ENCODE measurements at regions of chr4 and their contacts with region 1.

Region 1: DNA sequence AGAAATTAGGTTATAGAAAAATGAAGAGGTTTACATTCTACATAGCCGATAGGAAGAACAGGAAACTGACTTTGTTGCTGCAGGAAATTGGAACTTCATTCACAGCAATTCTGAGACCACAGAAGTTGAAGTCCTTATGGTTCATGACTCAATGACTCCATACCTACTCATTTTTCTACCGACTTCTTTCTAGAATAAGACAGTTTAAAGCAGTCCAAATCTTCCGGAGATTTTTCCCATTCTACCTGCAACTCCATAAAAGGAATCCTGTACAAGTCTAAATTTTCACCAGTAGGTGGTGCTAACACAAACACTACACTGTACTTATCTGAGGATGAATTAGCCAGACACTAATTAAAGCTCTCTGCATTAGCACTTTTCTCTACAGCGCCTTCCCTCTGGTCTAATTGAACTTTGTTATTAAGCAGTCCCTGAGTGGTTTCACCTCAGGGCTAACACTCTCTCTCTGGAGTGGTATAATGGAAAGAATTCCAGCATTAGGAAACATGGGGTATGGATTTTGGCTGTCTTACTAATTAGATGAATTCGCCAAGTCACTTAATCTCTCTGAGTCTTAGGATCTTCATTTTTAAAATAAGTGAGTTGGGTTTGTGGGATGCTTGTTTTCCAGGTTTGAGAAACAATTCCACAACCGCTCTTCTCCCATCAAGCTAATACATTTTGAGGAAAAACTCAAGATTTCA is 167.9 kb downstream of the SMIM20 start:
- DNase-seq: no peak
- ATAC-seq: peak; percentile 61
- H3K4me3 Mint-ChIP-seq: no peak overlapping the region
- H3K27ac Mint-ChIP-seq: peak overlapping the region; percentile 74
- H3K4me1 Mint-ChIP-seq: peaks cover 71% of the 10 kb centered on the region
- H3K27me3 Mint-ChIP-seq: peaks cover 19% of the 10 kb centered on the region

Region 2: DNA sequence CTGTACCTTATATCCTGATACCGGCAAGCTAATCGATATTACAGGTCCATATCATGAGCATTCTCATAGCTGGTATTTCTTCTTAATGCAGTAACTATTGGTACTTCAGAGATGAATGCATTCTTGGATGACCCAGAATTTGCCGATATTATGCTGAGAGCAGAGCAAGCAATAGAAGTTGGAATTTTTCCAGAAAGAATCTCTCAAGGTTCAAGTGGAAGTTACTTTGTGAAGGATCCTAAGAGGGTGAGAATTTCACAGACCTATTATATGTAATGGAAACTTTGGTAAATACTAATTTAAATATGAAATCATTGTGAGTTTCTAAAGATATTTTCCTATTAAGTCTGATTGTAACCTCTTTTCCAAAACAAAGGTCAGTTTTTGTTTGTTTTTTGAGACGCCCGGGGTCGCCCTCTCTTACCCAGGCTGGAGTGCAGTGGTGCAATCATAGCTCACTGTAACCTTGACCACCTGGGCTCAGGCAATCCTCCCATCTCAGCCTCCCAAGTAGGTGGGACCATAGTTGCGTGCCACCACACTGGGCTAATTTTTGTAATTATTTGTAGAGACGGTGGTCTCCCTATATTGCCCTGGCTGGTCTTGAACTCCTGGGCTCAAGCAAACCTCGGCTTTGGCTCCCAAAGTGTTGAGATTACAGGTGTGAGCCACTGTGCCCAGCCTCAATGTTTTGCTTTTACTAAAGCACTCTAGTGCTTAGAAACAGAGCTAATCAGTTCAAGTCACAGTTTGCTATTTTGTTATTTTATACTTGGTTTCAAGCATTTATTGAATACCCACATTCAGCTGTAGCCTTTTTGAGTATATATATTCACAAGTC is 829.5 kb before region 1 on chr4:
- CTCF ChIA-PET with region 1: no interaction called
- POLR2A ChIA-PET with region 1: no interaction called
- intact Hi-C with region 1: no loop called
- DNase-seq: no peak
- ATAC-seq: no peak
- H3K4me3 Mint-ChIP-seq: no peak overlapping the region
- H3K27ac Mint-ChIP-seq: no peak overlapping the region
- H3K4me1 Mint-ChIP-seq: peaks cover 31% of the 10 kb centered on the region
- H3K27me3 Mint-ChIP-seq: no peaks in the 10 kb centered on the region

Region 3: DNA sequence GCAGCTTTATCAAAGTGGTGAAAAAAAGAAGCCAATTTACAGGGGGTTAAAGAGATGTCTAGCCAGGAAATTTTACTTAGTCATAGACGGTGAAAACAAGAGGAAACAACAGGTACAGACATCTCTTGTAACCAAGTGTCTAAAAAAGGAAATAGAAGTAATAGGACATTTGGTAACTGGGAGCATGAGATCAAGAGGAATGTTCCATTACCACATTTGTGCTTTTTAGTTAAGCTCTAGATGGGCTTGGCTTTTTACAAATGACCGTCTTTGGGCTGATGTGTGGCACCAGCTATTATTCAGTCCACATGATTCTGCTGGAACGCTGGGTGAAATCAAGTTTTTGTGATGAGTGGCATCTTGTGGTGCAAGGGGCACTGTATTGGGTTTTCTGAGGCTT is 11.6 kb after region 1 on chr4:
- CTCF ChIA-PET with region 1: interaction called, 13 read pairs
- POLR2A ChIA-PET with region 1: no interaction called
- intact Hi-C with region 1: no loop called
- DNase-seq: no peak
- ATAC-seq: no peak
- H3K4me3 Mint-ChIP-seq: no peak overlapping the region
- H3K27ac Mint-ChIP-seq: peak overlapping the region; percentile 23
- H3K4me1 Mint-ChIP-seq: peaks cover 24% of the 10 kb centered on the region
- H3K27me3 Mint-ChIP-seq: peaks cover 17% of the 10 kb centered on the region

Region 4: DNA sequence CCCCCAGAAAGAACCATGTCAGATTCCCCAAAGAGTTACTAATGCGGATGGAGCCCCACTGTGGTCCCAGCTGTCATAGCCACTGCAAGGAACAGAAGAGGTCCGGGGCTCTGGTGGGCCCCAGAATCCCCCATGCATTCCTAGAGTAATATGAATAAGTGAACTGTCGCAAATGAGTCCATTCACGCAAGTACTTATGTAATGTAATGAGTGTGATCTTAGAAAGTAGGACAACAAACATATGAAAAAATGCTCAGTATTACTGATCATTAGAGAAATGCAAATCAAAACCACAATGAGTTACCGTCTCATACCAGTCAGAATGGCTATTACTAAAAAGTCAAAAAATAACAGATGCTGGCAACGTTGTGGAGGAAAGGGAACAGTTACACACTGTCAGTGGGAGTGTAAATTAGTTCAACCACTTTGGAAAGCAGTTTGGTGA is 97.4 kb after region 1 on chr4:
- CTCF ChIA-PET with region 1: interaction called, 3 read pairs
- POLR2A ChIA-PET with region 1: no interaction called
- intact Hi-C with region 1: loop called in 1 of 2 experiments (anchors 1 kb)
- DNase-seq: peak; percentile 48
- ATAC-seq: peak; percentile 67
- H3K4me3 Mint-ChIP-seq: no peak overlapping the region
- H3K27ac Mint-ChIP-seq: peak overlapping the region; percentile 55
- H3K4me1 Mint-ChIP-seq: peaks cover 17% of the 10 kb centered on the region
- H3K27me3 Mint-ChIP-seq: no peaks in the 10 kb centered on the region

Region 5: GRCh38 chr4:26325191-26325590 is 243.2 kb after region 1 on chr4:
- CTCF ChIA-PET with region 1: interaction called, 20 read pairs
- POLR2A ChIA-PET with region 1: interaction called, 3 read pairs
- intact Hi-C with region 1: loop called in 1 of 2 experiments (anchors 1 kb)
- DNase-seq: no peak
- ATAC-seq: peak; percentile 55
- H3K4me3 Mint-ChIP-seq: peak overlapping the region; percentile 41
- H3K27ac Mint-ChIP-seq: peak overlapping the region; percentile 67
- H3K4me1 Mint-ChIP-seq: peaks cover 47% of the 10 kb centered on the region
- H3K27me3 Mint-ChIP-seq: no peaks in the 10 kb centered on the region

Region 6: GRCh38 chr4:26746802-26747213 is 664.9 kb after region 1 on chr4:
- CTCF ChIA-PET with region 1: no interaction called
- POLR2A ChIA-PET with region 1: no interaction called
- intact Hi-C with region 1: loop called in 1 of 2 experiments (anchors 5 kb)
- DNase-seq: peak; percentile 69
- ATAC-seq: peak; percentile 100
- H3K4me3 Mint-ChIP-seq: no peak overlapping the region
- H3K27ac Mint-ChIP-seq: no peak overlapping the region
- H3K4me1 Mint-ChIP-seq: peaks cover 14% of the 10 kb centered on the region
- H3K27me3 Mint-ChIP-seq: no peaks in the 10 kb centered on the region

Measured in activated CD4-positive, alpha-beta T cell treated with anti-CD3 and anti-CD28 coated beads for 36 hours (primary cell).